ENCODE measurements at regions of chr10 and their contacts with region 1.

Region 1: GRCh38 chr10:32055813-32056600 is at the start of gene KIF5B:
- DNase-seq: peak; percentile 91
- H3K4me3 ChIP-seq: peak within 1 kb of the TSS; percentile 80 to 98 (median 81)
- H3K27ac ChIP-seq: peak within 1 kb of the TSS; percentile 79
- H3K4me1 ChIP-seq: peaks cover 33% of the 10 kb centered on the region
- H3K27me3 ChIP-seq: no peaks in the 10 kb centered on the region
- CTCF ChIP-seq: no peak
- POLR2A ChIP-seq: peak; percentile 99
- total RNA-seq, gene KIF5B: 152 and 159 TPM in 2 replicates

Region 2: GRCh38 chr10:32005050-32005449 is 51.0 kb before region 1 on chr10:
- CTCF ChIA-PET with region 1: no interaction called
- POLR2A ChIA-PET with region 1: no interaction called
- dilution Hi-C with region 1: no loop called
- intact Hi-C with region 1: no loop called
- DNase-seq: peak; percentile 57
- H3K4me3 ChIP-seq: no peak overlapping the region
- H3K27ac ChIP-seq: no peak overlapping the region
- H3K4me1 ChIP-seq: no peaks in the 10 kb centered on the region
- H3K27me3 ChIP-seq: no peaks in the 10 kb centered on the region
- CTCF ChIP-seq: peak; percentile 41 to 55
- POLR2A ChIP-seq: no peak

Region 3: GRCh38 chr10:32131388-32131787 is 75.4 kb after region 1 on chr10:
- CTCF ChIA-PET with region 1: no interaction called
- POLR2A ChIA-PET with region 1: no interaction called
- dilution Hi-C with region 1: no loop called
- intact Hi-C with region 1: loop called (anchors 5 kb)
- DNase-seq: peak; percentile 74
- H3K4me3 ChIP-seq: no peak overlapping the region
- H3K27ac ChIP-seq: peak overlapping the region; percentile 69
- H3K4me1 ChIP-seq: peaks cover 16% of the 10 kb centered on the region
- H3K27me3 ChIP-seq: peaks cover 0 to 2% of the 10 kb centered on the region in 2 experiments
- CTCF ChIP-seq: no peak
- POLR2A ChIP-seq: no peak

Region 4: DNA sequence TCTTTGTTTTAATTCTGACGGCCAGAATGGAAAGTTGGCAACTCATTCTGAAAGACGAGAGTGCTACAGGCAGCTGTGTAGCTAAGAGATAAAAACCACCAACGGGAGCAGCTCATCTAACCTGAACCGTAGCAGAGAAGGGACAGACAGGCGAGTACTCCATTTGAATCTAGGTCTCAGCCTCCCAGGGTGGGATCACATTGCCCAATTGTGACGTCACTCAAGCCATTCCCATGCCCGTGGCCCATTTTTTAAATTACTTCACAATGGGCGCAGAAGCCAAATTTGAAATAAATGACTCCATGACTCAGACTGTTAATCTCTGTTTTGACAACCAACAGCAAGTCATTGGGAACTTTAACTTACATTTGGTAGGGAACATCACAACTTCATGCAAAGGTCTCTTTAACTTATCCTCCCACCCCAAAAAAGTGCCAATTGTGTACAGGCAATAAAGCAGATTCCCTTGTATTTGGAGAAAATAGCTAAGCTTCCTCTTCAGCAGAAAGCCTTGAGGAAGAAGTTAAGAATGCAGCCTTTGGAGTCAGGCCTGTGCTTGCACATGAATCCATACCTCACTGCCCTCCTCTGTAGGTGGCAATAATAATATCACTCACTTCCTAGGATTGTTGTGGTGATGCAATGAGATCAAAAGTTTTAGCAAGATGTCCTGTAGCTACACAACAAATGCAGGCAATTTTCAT is 93.4 kb after region 1 on chr10:
- CTCF ChIA-PET with region 1: interaction called, 3 read pairs
- POLR2A ChIA-PET with region 1: no interaction called
- dilution Hi-C with region 1: no loop called
- intact Hi-C with region 1: loop called (anchors 1 kb)
- DNase-seq: peak; percentile 72
- H3K4me3 ChIP-seq: no peak overlapping the region
- H3K27ac ChIP-seq: peak overlapping the region; percentile 41
- H3K4me1 ChIP-seq: peaks cover 21% of the 10 kb centered on the region
- H3K27me3 ChIP-seq: no peaks in the 10 kb centered on the region
- CTCF ChIP-seq: no peak
- POLR2A ChIP-seq: no peak

Measured in endothelial cell of umbilical vein (primary cell).